Adrenal gland (tissue), 19 donors: ENCODE measurements at regions of chr12 and their contacts with region 1.

Region 1: DNA sequence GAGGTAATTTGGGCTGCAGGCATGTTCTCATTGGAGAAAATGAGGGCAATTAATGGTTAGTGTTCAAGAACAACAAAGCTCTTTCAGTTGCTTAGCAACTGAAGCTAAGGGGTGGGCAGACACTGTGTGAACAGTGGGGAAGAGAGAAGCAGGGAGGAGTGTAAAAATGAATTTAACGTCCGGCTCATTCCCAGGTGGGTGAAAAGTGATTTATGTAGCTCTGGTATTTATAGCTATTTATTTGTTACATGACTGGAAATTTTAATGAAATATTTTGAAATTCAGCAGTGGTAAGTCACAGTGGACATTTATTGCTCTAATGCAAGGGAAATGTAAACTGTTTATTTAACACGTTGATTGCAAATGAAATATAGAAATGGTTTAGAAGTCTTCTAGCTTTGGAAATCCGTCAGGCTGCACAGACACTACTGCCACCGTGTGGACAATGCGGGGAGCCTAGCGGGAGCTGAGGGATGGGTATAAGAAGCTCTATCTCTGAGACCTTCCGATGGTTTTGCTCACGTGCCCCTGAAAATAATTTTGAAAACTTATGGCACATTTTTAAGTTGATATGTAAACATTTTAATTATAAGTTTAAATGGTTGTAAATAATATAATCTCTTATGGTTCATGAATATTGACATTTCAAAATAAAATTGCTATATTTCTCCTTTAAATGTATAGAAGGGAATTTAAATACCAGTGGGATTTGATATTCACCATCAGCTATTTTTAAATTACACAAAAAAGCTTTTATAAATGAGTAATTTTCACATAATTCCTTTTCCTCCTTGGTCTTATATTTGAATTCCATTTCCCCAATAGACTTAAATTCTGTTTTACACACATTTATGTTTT is 54.4 kb downstream of the E2F7 start:
- DNase-seq: peak; percentile 53 to 86 (median 71)
- H3K4me3 ChIP-seq: no peak overlapping the region
- H3K27ac ChIP-seq: no peak overlapping the region
- H3K4me1 ChIP-seq: no peaks in the 10 kb centered on the region
- H3K27me3 ChIP-seq: no peaks in the 10 kb centered on the region
- CTCF ChIP-seq: peak; percentile 49 to 96 (median 72)
- POLR2A ChIP-seq: no peak

Region 2: GRCh38 chr12:76627346-76628135 is 383.4 kb before region 1 on chr12:
- intact Hi-C with region 1: loop called (anchors 5 to 10 kb)
- DNase-seq: no peak
- H3K4me3 ChIP-seq: no peak overlapping the region
- H3K27ac ChIP-seq: no peak overlapping the region
- H3K4me1 ChIP-seq: no peaks in the 10 kb centered on the region
- H3K27me3 ChIP-seq: no peaks in the 10 kb centered on the region
- CTCF ChIP-seq: no peak
- POLR2A ChIP-seq: no peak